GM12878 (cell line): ENCODE measurements at regions of chrX and their contacts with region 1.

Region 1: GRCh38 chrX:13734278-13735172 is at the starts of genes OFD1 and TRAPPC2:
- DNase-seq: peak; percentile 96
- ATAC-seq: peak; percentile 92
- H3K4me3 ChIP-seq: peak within 1 kb of the TSS; percentile 78
- H3K27ac ChIP-seq: peak within 1 kb of the TSS; percentile 87
- H3K4me1 ChIP-seq: no peaks in the 10 kb centered on the region
- H3K27me3 ChIP-seq: no peaks in the 10 kb centered on the region
- CTCF ChIP-seq: no peak
- EP300 ChIP-seq: 0 out of 4 replicates have a peak, but pooled peaks of 1 of the 2 experiments have one; percentile 24
- POLR2A ChIP-seq: peak; percentile 87
- RAD21 ChIP-seq: no peak
- polyA plus RNA-seq, gene OFD1: 43.0 to 64.5 TPM
- polyA plus RNA-seq, gene TRAPPC2: 18.3 to 27.5 TPM

Region 2: DNA sequence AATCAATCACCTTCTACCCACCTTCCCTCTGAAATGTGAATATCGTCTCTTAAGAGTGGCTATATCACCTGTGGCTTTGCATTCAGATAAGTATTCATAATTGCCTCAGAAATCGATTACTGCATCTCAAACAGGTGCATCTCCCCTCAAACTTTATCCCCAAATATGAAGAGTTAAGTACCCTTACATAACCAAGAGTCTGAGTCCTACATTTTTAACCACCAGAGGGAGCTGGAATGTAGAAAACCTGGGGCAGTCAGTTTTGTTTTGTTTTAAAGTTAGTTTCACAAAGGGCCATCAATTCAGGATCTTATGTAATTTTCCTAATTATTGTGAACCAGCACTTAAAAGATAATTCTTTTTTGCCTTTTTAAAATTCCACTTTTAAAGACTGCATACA is 75.9 kb before region 1 on chrX:
- CTCF ChIA-PET with region 1: interaction called, 8 read pairs
- POLR2A ChIA-PET with region 1: interaction called, 8 read pairs
- RAD21 ChIA-PET with region 1: interaction called, 14 read pairs
- SMC1A ChIA-PET with region 1: interaction called, 17 read pairs
- in situ Hi-C with region 1: no loop called
- intact Hi-C with region 1: loop called (anchors 5 kb)
- DNase-seq: no peak
- ATAC-seq: peak; percentile 66
- H3K4me3 ChIP-seq: no peak overlapping the region
- H3K27ac ChIP-seq: peak overlapping the region; percentile 73
- H3K4me1 ChIP-seq: peaks cover 14% of the 10 kb centered on the region
- H3K27me3 ChIP-seq: no peaks in the 10 kb centered on the region
- CTCF ChIP-seq: peak; percentile 59 to 72 (median 68)
- EP300 ChIP-seq: no peak
- POLR2A ChIP-seq: no peak
- RAD21 ChIP-seq: peak; percentile 93

Region 3: GRCh38 chrX:13669246-13669737 is 65.2 kb before region 1 on chrX:
- CTCF ChIA-PET with region 1: interaction called, 9 read pairs
- POLR2A ChIA-PET with region 1: interaction called, 8 read pairs
- RAD21 ChIA-PET with region 1: interaction called, 20 read pairs
- SMC1A ChIA-PET with region 1: interaction called, 25 read pairs
- in situ Hi-C with region 1: no loop called
- intact Hi-C with region 1: loop called (anchors 2 kb)
- DNase-seq: peak; percentile 89
- ATAC-seq: peak; percentile 77
- H3K4me3 ChIP-seq: peak overlapping the region; percentile 44; the same call in 1 of the 2 replicates
- H3K27ac ChIP-seq: peak overlapping the region; percentile 92
- H3K4me1 ChIP-seq: peaks cover 37% of the 10 kb centered on the region
- H3K27me3 ChIP-seq: no peaks in the 10 kb centered on the region
- CTCF ChIP-seq: no peak
- EP300 ChIP-seq: peak; percentile 91 to 92
- POLR2A ChIP-seq: no peak
- RAD21 ChIP-seq: 0 out of 2 replicates have a peak, but pooled peaks have one; percentile 15

Region 4: DNA sequence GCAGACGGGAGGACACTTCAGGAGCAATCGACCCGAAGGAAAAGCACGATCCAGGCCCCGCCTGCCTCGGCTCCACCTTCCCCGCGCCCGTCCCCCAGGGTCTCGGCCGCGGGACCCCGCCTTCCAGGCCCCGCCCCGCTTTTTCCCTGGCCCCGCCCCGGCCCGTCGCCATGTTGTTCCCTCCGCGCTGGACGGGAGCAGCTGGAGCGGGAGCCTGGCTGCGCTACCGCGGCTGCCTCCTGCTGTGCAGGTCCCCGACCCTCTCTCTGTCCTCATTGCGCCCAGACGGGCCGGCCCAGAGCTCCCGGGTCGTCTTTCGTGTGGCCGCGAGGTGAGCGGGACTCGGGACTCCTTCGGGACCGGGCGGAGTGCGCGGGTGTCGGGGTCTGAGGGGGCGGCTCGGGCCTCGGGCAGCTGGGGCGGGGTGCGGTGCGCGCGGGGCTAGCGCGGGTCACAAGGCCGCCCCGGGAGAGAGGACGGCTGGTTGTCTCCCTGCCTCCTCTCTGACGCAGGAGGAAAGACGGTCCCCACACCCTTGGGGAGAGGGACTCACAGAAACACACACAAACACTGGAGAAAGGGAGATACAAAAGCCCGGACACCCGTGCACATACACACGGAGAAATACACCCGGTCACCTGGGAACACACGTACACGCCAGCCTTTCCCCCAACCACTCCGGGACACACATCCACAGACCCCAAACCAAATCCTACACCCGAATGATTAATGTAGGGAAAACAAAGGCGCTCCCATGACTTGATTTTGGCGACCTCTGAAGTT is 45.4 kb before region 1 on chrX and contains the start of gene RAB9A:
- CTCF ChIA-PET with region 1: interaction called, 89 read pairs
- POLR2A ChIA-PET with region 1: interaction called, 130 read pairs
- RAD21 ChIA-PET with region 1: interaction called, 201 read pairs
- SMC1A ChIA-PET with region 1: interaction called, 198 read pairs
- in situ Hi-C with region 1: no loop called
- intact Hi-C with region 1: loop called (anchors 2 kb)
- DNase-seq: no peak
- ATAC-seq: peak; percentile 77
- H3K4me3 ChIP-seq: peak within 1 kb of the TSS; percentile 84
- H3K27ac ChIP-seq: peak within 1 kb of the TSS; percentile 91
- H3K4me1 ChIP-seq: peaks cover 16% of the 10 kb centered on the region
- H3K27me3 ChIP-seq: no peaks in the 10 kb centered on the region
- CTCF ChIP-seq: no peak
- EP300 ChIP-seq: peak in 1 of 2 experiments; percentile 18; a peak in 1 of 4 replicates
- POLR2A ChIP-seq: peak; percentile 86
- RAD21 ChIP-seq: no peak
- polyA plus RNA-seq, gene RAB9A: 49.2 to 49.3 TPM

Region 5: DNA sequence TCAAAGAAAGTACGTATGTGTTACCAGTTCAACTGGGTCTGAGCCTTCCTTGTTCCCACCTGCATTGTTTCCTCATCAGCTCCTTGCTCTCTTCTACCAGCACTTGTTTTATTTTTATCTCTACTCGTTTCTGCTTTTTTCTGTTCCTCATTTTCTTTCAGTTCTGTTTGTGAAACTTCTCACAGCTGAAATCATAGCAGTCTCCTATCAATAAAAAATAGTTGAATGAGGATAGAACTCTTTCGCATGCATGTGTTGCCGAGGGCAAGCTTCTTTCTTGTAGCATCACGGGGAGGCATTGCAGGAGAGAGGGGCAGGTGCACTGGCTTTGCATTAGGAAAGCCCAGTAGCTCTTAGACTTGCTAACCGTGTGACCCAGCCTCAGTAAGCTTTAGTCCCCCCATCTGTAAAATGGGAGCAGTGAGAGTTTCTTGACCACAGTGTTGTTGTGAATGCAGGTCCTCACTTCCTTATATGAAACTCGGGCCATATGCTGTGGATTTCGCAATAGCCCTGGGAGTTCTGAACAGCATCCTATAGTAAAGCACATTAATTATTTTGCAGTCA is 24.7 kb after region 1 on chrX:
- CTCF ChIA-PET with region 1: interaction called, 3 read pairs
- POLR2A ChIA-PET with region 1: interaction called, 5 read pairs
- RAD21 ChIA-PET with region 1: interaction called, 13 read pairs
- SMC1A ChIA-PET with region 1: interaction called, 24 read pairs
- in situ Hi-C with region 1: no loop called
- intact Hi-C with region 1: no loop called
- DNase-seq: peak; percentile 70
- ATAC-seq: peak; percentile 72
- H3K4me3 ChIP-seq: peak overlapping the region; percentile 3; the same call in 1 of the 2 replicates
- H3K27ac ChIP-seq: peak overlapping the region; percentile 79
- H3K4me1 ChIP-seq: peaks cover 36% of the 10 kb centered on the region
- H3K27me3 ChIP-seq: no peaks in the 10 kb centered on the region
- CTCF ChIP-seq: no peak
- EP300 ChIP-seq: peak; percentile 62 to 77; a peak in 3 of 4 replicates
- POLR2A ChIP-seq: no peak
- RAD21 ChIP-seq: no peak

Region 6: GRCh38 chrX:14872851-14873675 is 1138.5 kb after region 1 on chrX and contains the starts of genes FANCB and MOSPD2:
- CTCF ChIA-PET with region 1: no interaction called
- POLR2A ChIA-PET with region 1: no interaction called
- RAD21 ChIA-PET with region 1: no interaction called
- SMC1A ChIA-PET with region 1: no interaction called
- in situ Hi-C with region 1: no loop called
- intact Hi-C with region 1: loop called (anchors 5 kb)
- DNase-seq: peak; percentile 73
- ATAC-seq: peak; percentile 97
- H3K4me3 ChIP-seq: peak within 1 kb of the TSS; percentile 73
- H3K27ac ChIP-seq: peak within 1 kb of the TSS; percentile 69
- H3K4me1 ChIP-seq: no peaks in the 10 kb centered on the region
- H3K27me3 ChIP-seq: no peaks in the 10 kb centered on the region
- CTCF ChIP-seq: no peak
- EP300 ChIP-seq: no peak
- POLR2A ChIP-seq: peak; percentile 74
- RAD21 ChIP-seq: no peak
- polyA plus RNA-seq, gene FANCB: 9.3 to 14.6 TPM
- polyA plus RNA-seq, gene MOSPD2: 4.9 to 6.2 TPM